ENCODE measurements at regions of chr5 and their contacts with region 1.

Region 1: DNA sequence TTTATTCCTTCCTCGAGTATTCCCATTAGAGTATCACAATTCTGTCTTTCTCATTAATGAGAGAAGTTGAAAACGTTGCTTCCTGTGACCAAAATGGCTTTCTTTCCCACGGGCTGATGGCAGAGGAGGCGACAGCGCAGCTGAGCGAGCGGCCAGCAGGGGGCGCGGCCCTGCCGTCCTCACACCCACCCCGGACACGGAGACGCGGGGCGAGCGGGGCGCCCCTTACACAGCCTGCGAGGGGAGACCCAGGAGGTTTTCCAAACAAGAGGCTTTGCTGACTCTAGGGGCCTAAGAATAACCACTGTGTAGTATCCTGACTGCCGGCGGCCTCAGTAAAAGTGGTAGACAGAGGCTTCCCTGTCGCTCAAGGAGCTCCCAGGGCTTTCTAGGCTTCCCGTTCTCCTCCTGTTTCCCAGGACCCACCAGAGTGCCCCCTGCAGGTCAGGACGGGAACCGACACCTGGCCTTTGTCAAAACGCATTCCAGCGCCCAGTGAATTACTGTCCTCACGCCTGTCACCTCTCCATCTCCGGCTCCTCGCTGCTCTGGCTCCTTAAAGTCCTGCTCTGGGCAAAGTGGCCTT is 27.3 kb upstream of the FGF1 start:
- DNase-seq: peak; percentile 78
- ATAC-seq: peak; percentile 97
- H3K4me3 Mint-ChIP-seq: peak overlapping the region; percentile 80
- H3K27ac Mint-ChIP-seq: no peak overlapping the region
- H3K4me1 Mint-ChIP-seq: peaks cover 10% of the 10 kb centered on the region
- H3K27me3 Mint-ChIP-seq: peaks cover 12% of the 10 kb centered on the region
- CTCF ChIP-seq: peak; percentile 93

Region 2: GRCh38 chr5:142151436-142152383 is 561.5 kb before region 1 on chr5:
- CTCF ChIA-PET with region 1: interaction called, 3 read pairs
- POLR2A ChIA-PET with region 1: no interaction called
- intact Hi-C with region 1: loop called (anchors 1 kb)
- DNase-seq: no peak
- ATAC-seq: peak; percentile 37
- H3K4me3 Mint-ChIP-seq: no peak overlapping the region
- H3K27ac Mint-ChIP-seq: no peak overlapping the region
- H3K4me1 Mint-ChIP-seq: no peaks in the 10 kb centered on the region
- H3K27me3 Mint-ChIP-seq: no peaks in the 10 kb centered on the region
- CTCF ChIP-seq: peak; percentile 44

Region 3: DNA sequence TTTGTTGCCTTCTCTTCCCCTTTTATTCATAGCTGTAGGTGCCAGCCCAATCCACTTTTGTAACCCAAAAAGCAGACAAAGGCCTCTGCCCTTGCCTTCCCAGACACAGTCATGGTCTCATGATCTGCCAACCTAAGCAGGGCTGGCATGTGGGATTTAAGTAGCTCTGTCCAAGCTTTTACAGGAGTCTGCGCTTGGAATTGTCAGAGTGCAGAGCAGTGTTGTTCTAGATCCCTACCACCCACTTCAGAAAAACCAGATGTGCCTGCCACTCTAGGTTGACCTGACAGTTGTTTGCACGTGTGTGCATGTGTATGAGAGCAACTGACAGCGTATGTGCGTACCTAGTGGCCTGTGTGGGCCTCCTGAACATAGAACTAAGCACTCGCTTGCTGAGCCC is 300.6 kb before region 1 on chr5:
- CTCF ChIA-PET with region 1: no interaction called
- POLR2A ChIA-PET with region 1: no interaction called
- intact Hi-C with region 1: no loop called
- DNase-seq: no peak
- ATAC-seq: no peak
- H3K4me3 Mint-ChIP-seq: no peak overlapping the region
- H3K27ac Mint-ChIP-seq: no peak overlapping the region
- H3K4me1 Mint-ChIP-seq: peaks cover 4% of the 10 kb centered on the region
- H3K27me3 Mint-ChIP-seq: no peaks in the 10 kb centered on the region
- CTCF ChIP-seq: no peak

Region 4: GRCh38 chr5:142611154-142611553 is 102.1 kb before region 1 on chr5:
- CTCF ChIA-PET with region 1: no interaction called
- POLR2A ChIA-PET with region 1: no interaction called
- intact Hi-C with region 1: loop called (anchors 5 kb)
- DNase-seq: peak; percentile 29
- ATAC-seq: peak; percentile 77
- H3K4me3 Mint-ChIP-seq: no peak overlapping the region
- H3K27ac Mint-ChIP-seq: no peak overlapping the region
- H3K4me1 Mint-ChIP-seq: peaks cover 2% of the 10 kb centered on the region
- H3K27me3 Mint-ChIP-seq: peaks cover 19% of the 10 kb centered on the region
- CTCF ChIP-seq: no peak

Region 5: GRCh38 chr5:142769741-142770631 is 56.8 kb after region 1 on chr5 and contains the start of gene ARHGAP26:
- CTCF ChIA-PET with region 1: no interaction called
- POLR2A ChIA-PET with region 1: no interaction called
- intact Hi-C with region 1: loop called (anchors 1 kb)
- DNase-seq: peak; percentile 89
- ATAC-seq: peak; percentile 95
- H3K4me3 Mint-ChIP-seq: peak within 1 kb of the TSS; percentile 97
- H3K27ac Mint-ChIP-seq: peak within 1 kb of the TSS; percentile 91
- H3K4me1 Mint-ChIP-seq: peaks cover 25% of the 10 kb centered on the region
- H3K27me3 Mint-ChIP-seq: no peaks in the 10 kb centered on the region
- CTCF ChIP-seq: no peak
- total RNA-seq, gene ARHGAP26: 14.0 and 20.9 TPM in 2 replicates

Region 6: GRCh38 chr5:142783601-142784341 is 70.6 kb after region 1 on chr5:
- CTCF ChIA-PET with region 1: no interaction called
- POLR2A ChIA-PET with region 1: no interaction called
- intact Hi-C with region 1: no loop called
- DNase-seq: no peak
- ATAC-seq: no peak
- H3K4me3 Mint-ChIP-seq: no peak overlapping the region
- H3K27ac Mint-ChIP-seq: no peak overlapping the region
- H3K4me1 Mint-ChIP-seq: peaks cover 17% of the 10 kb centered on the region
- H3K27me3 Mint-ChIP-seq: no peaks in the 10 kb centered on the region
- CTCF ChIP-seq: no peak

Region 7: GRCh38 chr5:142888469-142889085 is 175.4 kb after region 1 on chr5:
- CTCF ChIA-PET with region 1: interaction called, 47 read pairs
- POLR2A ChIA-PET with region 1: no interaction called
- intact Hi-C with region 1: loop called (anchors 1 kb)
- DNase-seq: no peak
- ATAC-seq: no peak
- H3K4me3 Mint-ChIP-seq: no peak overlapping the region
- H3K27ac Mint-ChIP-seq: no peak overlapping the region
- H3K4me1 Mint-ChIP-seq: no peaks in the 10 kb centered on the region
- H3K27me3 Mint-ChIP-seq: no peaks in the 10 kb centered on the region
- CTCF ChIP-seq: peak; percentile 67

Region 8: GRCh38 chr5:143456952-143457547 is 743.8 kb after region 1 on chr5:
- CTCF ChIA-PET with region 1: no interaction called
- POLR2A ChIA-PET with region 1: no interaction called
- intact Hi-C with region 1: no loop called
- DNase-seq: no peak
- ATAC-seq: no peak
- H3K4me3 Mint-ChIP-seq: no peak overlapping the region
- H3K27ac Mint-ChIP-seq: no peak overlapping the region
- H3K4me1 Mint-ChIP-seq: peaks cover 5% of the 10 kb centered on the region
- H3K27me3 Mint-ChIP-seq: no peaks in the 10 kb centered on the region
- CTCF ChIP-seq: no peak

Measured in activated B cell treated with CpG ODN at 0.5 μM for 24 hours (primary cell).